HepG2 (cell line): ENCODE measurements at regions of chr9 and their contacts with region 1.

Region 1: GRCh38 chr9:75001719-75002422 is 26.2 kb downstream of the CARNMT1 start:
- DNase-seq: peak; percentile 99
- ATAC-seq: peak; percentile 99
- H3K4me3 ChIP-seq: peak overlapping the region in 2 of 3 experiments; percentile 15 to 43; a peak in 3 of 6 replicates
- H3K27ac ChIP-seq: peak overlapping the region; percentile 91
- H3K4me1 ChIP-seq: peaks cover 38% of the 10 kb centered on the region
- H3K27me3 ChIP-seq: no peaks in the 10 kb centered on the region
- CTCF ChIP-seq: peak; percentile 90
- EP300 ChIP-seq: peak in 1 of 2 experiments; percentile 94; a peak in 2 of 4 replicates
- POLR2A ChIP-seq: 0 out of 4 replicates have a peak, but pooled peaks of 1 of the 2 experiments have one; percentile 46
- RAD21 ChIP-seq: peak; percentile 89

Region 2: DNA sequence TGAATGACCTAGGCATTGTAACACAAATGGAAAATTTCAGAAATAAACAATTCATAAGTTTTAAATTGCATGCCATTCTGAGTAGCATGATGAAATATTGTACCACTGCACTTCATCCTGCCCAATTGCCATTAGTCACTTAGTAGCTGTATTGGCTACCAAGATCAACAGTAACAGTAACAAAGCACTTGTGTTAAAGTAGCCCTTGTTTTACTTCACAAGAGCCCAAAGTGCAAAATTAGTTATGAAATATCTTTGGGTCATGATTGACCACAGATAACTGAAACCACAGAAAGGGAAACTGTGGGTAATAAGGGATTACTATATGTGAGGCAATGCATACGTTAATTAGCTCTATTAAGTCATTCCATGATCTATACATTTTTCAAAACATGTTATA is 538.0 kb before region 1 on chr9:
- CTCF ChIA-PET with region 1: no interaction called
- POLR2A ChIA-PET with region 1: no interaction called
- in situ Hi-C with region 1: no loop called
- intact Hi-C with region 1: no loop called
- DNase-seq: peak; percentile 8
- ATAC-seq: no peak
- H3K4me3 ChIP-seq: no peak overlapping the region
- H3K27ac ChIP-seq: no peak overlapping the region
- H3K4me1 ChIP-seq: no peaks in the 10 kb centered on the region
- H3K27me3 ChIP-seq: no peaks in the 10 kb centered on the region
- CTCF ChIP-seq: no peak
- EP300 ChIP-seq: no peak
- POLR2A ChIP-seq: no peak
- RAD21 ChIP-seq: no peak

Region 3: DNA sequence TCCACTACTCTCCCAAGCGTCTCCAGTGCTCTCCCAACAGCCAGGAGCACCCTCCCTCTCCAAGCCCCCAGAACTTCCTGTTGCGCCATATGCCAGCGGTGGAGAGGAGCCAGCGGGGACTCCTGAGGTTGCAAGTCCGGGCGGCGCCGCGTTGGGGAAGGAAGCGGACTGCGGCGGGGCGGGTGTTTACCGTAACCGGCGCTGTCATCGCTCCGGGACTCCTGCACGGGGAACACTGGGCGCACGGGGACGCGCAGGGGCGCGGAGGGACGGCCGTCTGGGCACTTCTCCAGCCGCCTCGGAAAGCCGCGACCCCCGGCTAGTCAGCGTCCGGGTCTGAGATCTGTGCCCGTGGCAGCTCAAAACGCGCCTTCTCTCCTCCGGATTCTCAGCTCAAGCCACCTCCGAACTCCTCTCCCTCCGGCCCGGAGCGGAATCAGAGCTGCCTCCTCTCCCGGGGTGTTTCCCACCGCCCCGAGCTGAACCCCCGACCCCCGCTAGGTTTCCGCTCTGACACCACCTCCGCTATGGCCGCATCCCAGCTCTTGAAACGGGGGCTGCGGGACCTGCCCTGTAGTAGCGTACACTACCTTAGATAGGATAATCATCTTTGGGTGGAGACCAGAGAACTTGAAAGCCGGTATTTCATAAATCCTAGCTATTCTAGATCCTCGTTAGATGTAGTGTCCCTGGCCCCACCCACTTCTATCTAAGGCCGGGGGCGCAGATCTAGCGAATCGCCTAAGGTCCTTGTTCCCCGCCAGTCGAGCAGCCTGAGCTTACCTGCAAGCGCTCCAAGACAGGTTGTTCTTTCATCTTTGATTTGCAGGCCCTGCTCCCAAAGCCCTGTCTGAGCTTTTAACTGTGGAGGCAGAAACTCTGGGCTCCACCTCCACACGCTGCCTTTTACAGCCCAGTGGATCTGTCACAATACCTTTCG is 114.6 kb before region 1 on chr9 and contains the start of gene TRPM6:
- CTCF ChIA-PET with region 1: no interaction called
- POLR2A ChIA-PET with region 1: no interaction called
- in situ Hi-C with region 1: no loop called
- intact Hi-C with region 1: loop called (anchors 1 kb)
- DNase-seq: peak; percentile 66
- ATAC-seq: peak; percentile 95
- H3K4me3 ChIP-seq: peak within 1 kb of the TSS; percentile 49 to 78 (median 73)
- H3K27ac ChIP-seq: no peak within 1 kb of the TSS
- H3K4me1 ChIP-seq: peaks cover 15% of the 10 kb centered on the region
- H3K27me3 ChIP-seq: no peaks in the 10 kb centered on the region
- CTCF ChIP-seq: no peak
- EP300 ChIP-seq: no peak
- POLR2A ChIP-seq: no peak
- RAD21 ChIP-seq: peak; percentile 18; the same call in 1 of the 2 replicates
- total RNA-seq, gene TRPM6: 0.09 and 0.14 TPM in 2 replicates

Region 4: GRCh38 chr9:74952281-74953151 is 49.4 kb before region 1 on chr9 and contains the start of gene C9orf40:
- CTCF ChIA-PET with region 1: interaction called, 7 read pairs
- POLR2A ChIA-PET with region 1: interaction called, 21 read pairs
- in situ Hi-C with region 1: loop called (anchors 5 kb)
- intact Hi-C with region 1: loop called (anchors 1 kb)
- DNase-seq: peak; percentile 70
- ATAC-seq: peak; percentile 96
- H3K4me3 ChIP-seq: peak within 1 kb of the TSS; percentile 89 to 97 (median 89)
- H3K27ac ChIP-seq: peak within 1 kb of the TSS; percentile 99
- H3K4me1 ChIP-seq: peaks cover 33% of the 10 kb centered on the region
- H3K27me3 ChIP-seq: no peaks in the 10 kb centered on the region; a peak in 1 of 5 replicates
- CTCF ChIP-seq: peak; percentile 91
- EP300 ChIP-seq: no peak
- POLR2A ChIP-seq: peak; percentile 42 to 67; a peak in 3 of 4 replicates
- RAD21 ChIP-seq: peak; percentile 63
- total RNA-seq, gene C9orf40: 13.5 and 16.5 TPM in 2 replicates

Region 5: DNA sequence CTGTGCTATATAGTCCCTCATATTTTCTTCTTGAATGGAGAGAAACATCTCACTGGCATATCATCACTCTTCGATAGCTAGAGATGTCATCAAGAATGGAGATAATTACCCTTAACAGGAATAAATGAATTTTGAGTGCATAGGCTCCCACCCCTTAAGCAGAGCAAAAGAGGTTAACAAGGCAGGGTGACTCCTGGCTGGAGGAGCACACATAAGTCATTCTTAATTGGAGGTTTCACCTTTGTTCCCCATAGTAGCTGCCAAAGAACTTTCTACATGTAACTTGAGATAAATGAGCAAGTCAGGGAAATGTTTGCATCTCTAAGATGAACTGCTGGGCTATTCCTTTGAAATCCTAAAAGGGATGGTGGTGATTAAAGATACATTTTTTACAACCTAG is 412.5 kb after region 1 on chr9:
- CTCF ChIA-PET with region 1: no interaction called
- POLR2A ChIA-PET with region 1: no interaction called
- in situ Hi-C with region 1: no loop called
- intact Hi-C with region 1: no loop called
- DNase-seq: no peak
- ATAC-seq: no peak
- H3K4me3 ChIP-seq: no peak overlapping the region
- H3K27ac ChIP-seq: no peak overlapping the region
- H3K4me1 ChIP-seq: no peaks in the 10 kb centered on the region
- H3K27me3 ChIP-seq: no peaks in the 10 kb centered on the region
- CTCF ChIP-seq: no peak
- EP300 ChIP-seq: no peak
- POLR2A ChIP-seq: no peak
- RAD21 ChIP-seq: no peak